Thyroid gland (tissue), 4 donors: ENCODE measurements at regions of chr14 and their contacts with region 1.

Region 1: DNA sequence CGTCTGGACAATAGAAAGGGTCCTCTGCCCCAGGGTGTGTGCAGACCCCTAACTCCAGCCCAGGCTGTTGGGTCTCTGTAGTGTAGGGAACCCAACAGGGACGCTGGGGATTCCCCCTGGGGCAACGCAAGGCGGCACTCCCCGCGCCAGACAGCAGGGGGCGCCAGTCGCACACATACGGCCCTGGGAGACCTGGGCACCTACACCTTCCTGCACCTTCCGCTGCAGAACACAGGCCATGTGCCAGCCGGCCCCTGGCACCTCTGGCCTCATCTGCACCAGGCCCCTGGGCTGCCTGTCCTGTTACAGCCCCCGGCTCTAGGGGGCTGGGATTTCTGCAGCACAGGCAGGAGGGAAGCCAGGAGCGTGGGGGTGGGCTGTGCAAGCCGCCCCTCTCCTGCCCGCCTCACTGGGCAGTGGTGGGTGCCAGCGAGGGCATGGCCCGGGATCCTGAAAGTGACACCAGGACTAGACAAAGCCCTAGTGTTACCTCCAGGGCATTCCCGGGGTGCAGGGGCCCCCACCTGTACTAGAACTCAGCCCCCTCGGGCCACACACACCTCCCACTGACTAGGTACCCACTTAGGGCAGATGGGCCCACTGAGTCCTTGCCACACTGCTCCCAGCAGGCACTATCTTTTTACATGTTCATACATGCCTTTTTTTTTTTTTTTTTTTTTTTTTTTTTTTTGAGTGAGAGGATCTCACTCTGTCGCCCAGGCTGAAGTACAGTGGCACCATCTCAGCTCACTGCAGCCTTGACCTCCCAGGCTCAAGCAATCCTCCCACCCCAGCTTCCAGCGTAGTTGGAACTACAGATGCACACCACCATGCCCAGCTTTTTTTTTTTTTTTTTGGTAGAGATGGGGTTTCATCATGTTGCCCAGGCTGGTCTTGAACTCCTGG is 37.5 kb downstream of the CCNK start:
- DNase-seq: peak; percentile 84 to 87
- H3K4me3 ChIP-seq: no peak overlapping the region
- H3K27ac ChIP-seq: no peak overlapping the region
- H3K4me1 ChIP-seq: peaks cover 5 to 19% of the 10 kb centered on the region in 2 donors
- H3K27me3 ChIP-seq: no peaks in the 10 kb centered on the region
- CTCF ChIP-seq: peak; percentile 95 to 99 (median 97)
- POLR2A ChIP-seq: no peak

Region 2: DNA sequence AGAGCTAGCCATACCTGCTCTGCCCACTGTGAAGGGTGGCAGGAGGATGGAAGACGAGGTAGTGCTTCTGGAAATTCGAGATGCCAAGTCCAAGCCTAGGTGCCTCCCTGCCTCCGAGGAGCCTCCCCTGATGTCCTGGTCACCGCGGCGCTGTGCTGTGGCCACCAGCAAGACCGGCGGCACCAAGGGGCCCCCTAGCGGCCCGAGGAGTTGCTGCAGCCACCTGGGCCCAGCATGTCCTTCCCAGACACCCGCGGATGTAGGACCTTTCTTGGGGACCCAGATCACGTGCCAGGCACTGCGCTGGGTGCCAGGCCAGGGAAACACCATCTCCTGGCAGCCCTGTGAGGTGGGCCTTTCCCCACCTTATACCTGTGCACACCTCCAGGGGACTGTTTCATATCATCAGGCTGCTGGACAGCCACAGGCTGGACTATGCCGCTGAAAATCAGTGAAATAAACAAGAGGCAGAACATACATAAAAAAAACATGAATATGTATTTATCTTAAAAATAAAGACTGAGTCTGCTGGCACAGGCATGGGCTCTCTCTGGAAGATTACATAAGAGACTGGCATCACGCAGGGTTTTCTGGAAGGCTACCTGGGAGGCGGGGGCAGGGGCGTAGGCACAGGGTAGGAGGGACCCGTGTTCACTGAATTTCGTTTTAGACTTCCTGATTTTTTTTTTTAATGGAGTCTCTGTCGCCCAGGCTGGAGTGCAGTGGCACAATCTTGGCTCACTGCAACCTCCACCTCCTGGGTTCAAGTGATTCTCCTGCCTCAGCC is 110.3 kb after region 1 on chr14:
- intact Hi-C with region 1: loop called (anchors 1 kb)
- DNase-seq: peak; percentile 78
- H3K4me3 ChIP-seq: no peak overlapping the region
- H3K27ac ChIP-seq: no peak overlapping the region
- H3K4me1 ChIP-seq: peaks cover 0 to 3% of the 10 kb centered on the region in 2 donors
- H3K27me3 ChIP-seq: no peaks in the 10 kb centered on the region
- CTCF ChIP-seq: peak; percentile 90 to 98 (median 96)
- POLR2A ChIP-seq: no peak

Region 3: GRCh38 chr14:99659333-99659741 is 140.6 kb after region 1 on chr14:
- intact Hi-C with region 1: no loop called
- DNase-seq: peak in 1 of 2 donors; percentile 8
- H3K4me3 ChIP-seq: no peak overlapping the region
- H3K27ac ChIP-seq: no peak overlapping the region
- H3K4me1 ChIP-seq: peaks cover 0 to 10% of the 10 kb centered on the region in 2 donors
- H3K27me3 ChIP-seq: peaks cover 13% of the 10 kb centered on the region
- CTCF ChIP-seq: no peak
- POLR2A ChIP-seq: no peak